Psoas muscle (tissue), 8 donors: ENCODE measurements at regions of chr18 and their contacts with region 1.

Region 1: DNA sequence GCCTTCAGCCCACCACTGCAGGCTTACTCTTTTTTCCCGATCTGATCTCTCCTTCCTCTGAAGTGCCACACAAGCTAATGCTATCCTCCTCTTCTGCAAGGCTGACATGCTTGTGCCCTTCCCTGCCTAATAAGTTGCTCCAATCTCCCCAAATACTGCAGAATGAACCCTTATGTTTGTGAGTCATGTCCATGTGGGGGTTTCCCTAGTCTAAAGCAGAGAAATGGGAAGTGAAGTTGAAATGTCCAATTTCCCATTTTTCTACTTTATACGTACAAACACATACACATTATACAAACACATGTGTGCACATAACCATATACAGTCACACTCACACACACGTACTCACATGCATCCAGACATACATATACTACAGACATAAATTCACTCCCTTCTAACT is 288.1 kb upstream of the CELF4 start:
- DNase-seq: no peak
- ATAC-seq: no peak
- H3K4me3 ChIP-seq: no peak overlapping the region
- H3K27ac ChIP-seq: no peak overlapping the region
- H3K4me1 ChIP-seq: no peaks in the 10 kb centered on the region
- H3K27me3 ChIP-seq: no peaks in the 10 kb centered on the region
- CTCF ChIP-seq: no peak

Region 2: GRCh38 chr18:37805773-37806404 is 47.8 kb before region 1 on chr18:
- intact Hi-C with region 1: loop called in 1 of 2 experiments (anchors 1 kb)
- DNase-seq: no peak
- ATAC-seq: no peak
- H3K4me3 ChIP-seq: no peak overlapping the region
- H3K27ac ChIP-seq: no peak overlapping the region
- H3K4me1 ChIP-seq: no peaks in the 10 kb centered on the region
- H3K27me3 ChIP-seq: no peaks in the 10 kb centered on the region
- CTCF ChIP-seq: no peak

Region 3: GRCh38 chr18:37900326-37900725 is 46.6 kb after region 1 on chr18:
- intact Hi-C with region 1: no loop called
- DNase-seq: no peak
- ATAC-seq: no peak
- H3K4me3 ChIP-seq: no peak overlapping the region
- H3K27ac ChIP-seq: no peak overlapping the region
- H3K4me1 ChIP-seq: no peaks in the 10 kb centered on the region
- H3K27me3 ChIP-seq: no peaks in the 10 kb centered on the region
- CTCF ChIP-seq: no peak